Panc1 (cell line): ENCODE measurements at regions of chr12 and their contacts with region 1.

Region 1: GRCh38 chr12:89437231-89437630 is 84.9 kb upstream of the DUSP6 start:
- DNase-seq: no peak
- ATAC-seq: no peak
- H3K4me3 ChIP-seq: no peak overlapping the region
- H3K27ac ChIP-seq: no peak overlapping the region
- H3K4me1 ChIP-seq: no peaks in the 10 kb centered on the region
- H3K27me3 ChIP-seq: no peaks in the 10 kb centered on the region
- CTCF ChIP-seq: no peak

Region 2: GRCh38 chr12:89288959-89289358 is 148.3 kb before region 1 on chr12:
- CTCF ChIA-PET with region 1: no interaction called
- POLR2A ChIA-PET with region 1: interaction called, 10 read pairs
- in situ Hi-C with region 1: no loop called
- intact Hi-C with region 1: no loop called
- DNase-seq: no peak
- ATAC-seq: no peak
- H3K4me3 ChIP-seq: no peak overlapping the region
- H3K27ac ChIP-seq: no peak overlapping the region
- H3K4me1 ChIP-seq: no peaks in the 10 kb centered on the region
- H3K27me3 ChIP-seq: no peaks in the 10 kb centered on the region
- CTCF ChIP-seq: no peak

Region 3: DNA sequence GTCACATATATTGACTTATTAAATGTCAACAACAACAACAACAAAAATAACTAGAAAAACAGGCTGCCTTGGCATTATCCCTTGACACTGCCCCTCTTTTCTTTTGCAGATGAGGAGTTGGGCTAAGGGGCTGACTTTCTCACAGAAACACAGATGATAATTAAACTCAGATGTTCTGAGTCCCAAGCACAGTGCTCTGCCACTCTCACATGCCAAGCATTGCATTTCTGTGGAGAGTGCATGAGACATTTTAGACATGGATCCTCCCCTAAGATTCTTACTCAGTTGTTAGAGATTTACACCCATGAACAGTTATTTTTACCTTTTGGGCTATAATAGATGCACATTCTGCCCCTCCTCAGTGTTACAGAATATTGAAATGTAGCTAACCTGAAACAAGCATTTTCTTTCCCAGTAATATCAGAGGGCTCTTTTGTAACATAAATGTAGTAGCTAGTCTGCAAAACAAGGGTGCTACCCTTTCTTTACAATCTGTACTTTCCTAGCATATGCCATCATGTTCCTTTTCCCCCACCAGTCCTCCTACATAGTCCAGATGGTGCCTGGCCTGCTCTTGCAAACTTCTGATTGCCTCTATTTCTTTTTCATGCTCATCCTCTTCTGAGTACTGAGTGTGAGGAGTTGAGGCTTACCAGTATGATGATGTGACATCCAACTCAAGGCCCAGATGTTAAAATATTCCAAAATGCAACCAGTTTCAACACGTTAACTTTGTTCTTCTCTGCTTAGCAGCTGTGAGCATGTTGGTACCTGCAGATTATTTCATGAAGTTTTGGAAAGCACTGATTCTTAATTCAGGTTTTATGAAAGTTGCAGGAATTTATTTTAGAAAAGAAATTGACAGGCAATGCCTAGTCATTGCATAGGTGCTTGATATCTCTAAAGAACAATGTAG is 396.4 kb after region 1 on chr12:
- CTCF ChIA-PET with region 1: no interaction called
- POLR2A ChIA-PET with region 1: no interaction called
- in situ Hi-C with region 1: no loop called
- intact Hi-C with region 1: no loop called
- DNase-seq: no peak
- ATAC-seq: no peak
- H3K4me3 ChIP-seq: no peak overlapping the region
- H3K27ac ChIP-seq: no peak overlapping the region
- H3K4me1 ChIP-seq: no peaks in the 10 kb centered on the region
- H3K27me3 ChIP-seq: no peaks in the 10 kb centered on the region
- CTCF ChIP-seq: no peak